Esophagus muscularis mucosa (tissue), 4 donors: ENCODE measurements at regions of chr15 and their contacts with region 1.

Region 1: GRCh38 chr15:89776274-89777072 is at the start of gene MESP2:
- DNase-seq: peak; percentile 94
- H3K4me3 ChIP-seq: peak within 1 kb of the TSS; percentile 49 to 65 (median 53)
- H3K27ac ChIP-seq: peak within 1 kb of the TSS; percentile 28 to 59 (median 54)
- H3K4me1 ChIP-seq: peaks cover 11 to 16% (median 14%) of the 10 kb centered on the region in 4 donors
- H3K27me3 ChIP-seq: no peaks in the 10 kb centered on the region
- CTCF ChIP-seq: peak; percentile 43 to 61 (median 60)
- EP300 ChIP-seq: no peak
- POLR2A ChIP-seq: no peak
- total RNA-seq, gene MESP2: not detected

Region 2: DNA sequence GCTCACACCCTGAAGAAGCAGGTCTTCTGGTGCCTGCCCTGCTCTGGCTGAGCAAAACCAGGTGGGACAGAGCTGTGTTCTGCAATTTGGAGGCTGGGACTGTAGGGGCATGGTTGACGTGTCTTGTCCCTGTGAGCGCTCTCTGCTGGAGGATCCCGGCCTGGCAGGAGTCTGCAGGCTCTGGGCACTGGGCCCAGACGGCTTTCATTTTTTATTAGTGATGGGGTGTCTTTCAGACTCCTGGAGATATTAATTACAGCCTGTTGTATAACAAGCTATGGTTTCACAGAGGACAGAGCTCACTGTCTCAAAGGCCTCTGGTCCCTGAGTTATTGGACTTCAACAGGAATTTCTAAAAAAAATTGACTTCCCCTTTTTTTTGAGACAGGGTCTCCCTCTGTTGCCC is 195.1 kb after region 1 on chr15:
- intact Hi-C with region 1: loop called (anchors 10 kb)
- DNase-seq: no peak
- H3K4me3 ChIP-seq: no peak overlapping the region
- H3K27ac ChIP-seq: no peak overlapping the region
- H3K4me1 ChIP-seq: peaks cover 0 to 20% (median 0%) of the 10 kb centered on the region in 4 donors
- H3K27me3 ChIP-seq: no peaks in the 10 kb centered on the region
- CTCF ChIP-seq: peak; percentile 40 to 53 (median 51)
- EP300 ChIP-seq: no peak
- POLR2A ChIP-seq: no peak